ENCODE measurements at regions of chr1 and their contacts with region 1.

Region 1: DNA sequence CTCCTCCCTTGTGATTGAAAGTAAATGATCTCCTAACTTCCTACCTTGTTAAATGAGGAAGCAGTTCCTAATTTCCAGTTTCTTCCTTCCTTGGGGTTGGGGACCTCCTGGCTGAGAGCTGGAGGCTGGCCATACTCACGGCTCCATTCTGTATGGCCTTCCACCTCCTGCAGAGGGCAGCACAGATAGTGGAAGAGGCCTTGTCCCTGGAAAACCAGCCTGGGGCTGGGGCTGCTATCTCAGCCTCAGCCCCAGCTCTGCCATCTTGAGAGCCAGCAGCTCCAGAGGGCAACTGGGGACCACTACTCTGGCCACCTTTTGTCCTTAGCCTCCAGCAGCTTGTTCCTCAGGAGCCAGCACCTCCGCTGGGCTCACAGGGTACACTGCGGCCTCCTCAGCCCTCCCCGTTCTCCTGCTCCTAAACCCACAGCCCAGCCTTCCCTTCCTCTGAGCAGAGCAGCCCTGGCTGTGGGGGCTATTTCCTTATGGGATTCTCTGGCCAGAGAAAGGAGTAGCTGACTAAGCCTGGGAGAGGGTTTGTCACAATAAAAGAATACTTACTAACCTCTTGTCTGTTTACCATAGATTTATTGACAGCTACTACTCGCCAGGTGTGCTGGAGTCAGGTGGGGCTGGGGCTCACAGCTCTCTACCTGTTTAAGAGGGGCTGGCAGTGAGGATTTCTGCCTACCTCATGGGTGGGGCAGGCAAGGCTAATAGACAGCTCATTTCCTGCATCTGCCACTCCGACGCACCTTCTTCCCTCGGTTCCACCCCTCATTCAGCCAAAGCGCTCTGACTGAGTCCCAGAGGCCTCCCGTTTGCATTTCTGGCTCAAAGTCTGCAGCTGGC is 6.3 kb downstream of the TMEM234 start:
- DNase-seq: no peak
- ATAC-seq: peak; percentile 95
- H3K4me3 ChIP-seq: no peak overlapping the region
- H3K27ac ChIP-seq: no peak overlapping the region
- H3K4me1 ChIP-seq: no peaks in the 10 kb centered on the region
- H3K27me3 ChIP-seq: no peaks in the 10 kb centered on the region
- CTCF ChIP-seq: peak; percentile 82 to 93 (median 91)
- EP300 ChIP-seq: no peak
- POLR2A ChIP-seq: no peak
- RAD21 ChIP-seq: peak; percentile 82

Region 2: DNA sequence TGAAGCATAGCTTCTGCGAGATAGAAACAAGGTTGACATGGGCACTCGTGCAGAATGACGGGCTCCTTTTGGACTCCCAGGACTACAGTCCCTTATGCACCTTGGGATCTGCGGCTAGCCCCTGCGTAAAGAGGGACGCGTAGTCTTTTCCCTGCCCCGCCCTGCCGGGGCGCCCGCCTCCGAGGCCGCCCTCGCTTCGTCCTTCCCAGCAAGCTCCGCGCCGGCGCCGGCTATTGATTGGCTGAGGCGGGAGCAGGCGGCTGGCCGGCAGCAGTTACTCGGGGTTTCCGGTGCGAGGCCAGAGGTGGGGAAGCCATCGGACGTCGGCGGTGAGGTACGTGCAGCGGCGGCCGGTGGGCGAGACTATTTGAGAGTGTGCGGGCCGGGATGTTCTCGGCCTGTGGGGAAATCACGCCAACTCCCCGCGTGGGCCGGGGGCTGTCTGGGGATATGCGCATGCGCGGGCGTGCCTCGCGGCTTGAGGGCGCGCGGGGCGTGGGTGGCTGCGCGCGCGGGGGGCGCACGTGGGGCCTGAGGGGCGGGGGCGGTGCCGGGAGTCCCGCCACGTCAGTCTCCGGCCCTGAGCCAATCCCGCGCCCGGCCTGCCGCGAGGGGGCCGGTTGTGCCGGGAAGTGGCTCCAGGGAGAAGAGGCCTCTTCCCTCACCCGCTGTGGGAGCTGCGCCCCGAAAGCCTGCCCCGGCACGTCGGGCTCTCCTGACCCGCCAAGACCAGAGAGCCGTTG is 36.2 kb before region 1 on chr1 and contains the start of gene TXLNA:
- CTCF ChIA-PET with region 1: interaction called, 16 read pairs
- POLR2A ChIA-PET with region 1: interaction called, 5 read pairs
- RAD21 ChIA-PET with region 1: no interaction called
- SMC1A ChIA-PET with region 1: interaction called, 3 read pairs
- in situ Hi-C with region 1: no loop called
- intact Hi-C with region 1: no loop called
- DNase-seq: peak; percentile 60
- ATAC-seq: peak; percentile 93
- H3K4me3 ChIP-seq: peak within 1 kb of the TSS; percentile 89
- H3K27ac ChIP-seq: peak within 1 kb of the TSS; percentile 85
- H3K4me1 ChIP-seq: peaks cover 17% of the 10 kb centered on the region
- H3K27me3 ChIP-seq: no peaks in the 10 kb centered on the region
- CTCF ChIP-seq: no peak
- EP300 ChIP-seq: peak in 1 of 2 experiments; percentile 33; a peak in 1 of 4 replicates
- POLR2A ChIP-seq: peak; percentile 99
- RAD21 ChIP-seq: no peak
- polyA plus RNA-seq, gene TXLNA: 7.2 to 10.3 TPM

Region 3: GRCh38 chr1:32234792-32235191 is 18.9 kb after region 1 on chr1:
- CTCF ChIA-PET with region 1: interaction called, 50 read pairs
- POLR2A ChIA-PET with region 1: no interaction called
- RAD21 ChIA-PET with region 1: interaction called, 10 read pairs
- SMC1A ChIA-PET with region 1: interaction called, 37 read pairs
- in situ Hi-C with region 1: no loop called
- intact Hi-C with region 1: no loop called
- DNase-seq: no peak
- ATAC-seq: peak; percentile 16; the same call in 1 of the 3 replicates
- H3K4me3 ChIP-seq: no peak overlapping the region
- H3K27ac ChIP-seq: no peak overlapping the region
- H3K4me1 ChIP-seq: no peaks in the 10 kb centered on the region
- H3K27me3 ChIP-seq: no peaks in the 10 kb centered on the region
- CTCF ChIP-seq: no peak
- EP300 ChIP-seq: no peak
- POLR2A ChIP-seq: no peak
- RAD21 ChIP-seq: no peak

Region 4: DNA sequence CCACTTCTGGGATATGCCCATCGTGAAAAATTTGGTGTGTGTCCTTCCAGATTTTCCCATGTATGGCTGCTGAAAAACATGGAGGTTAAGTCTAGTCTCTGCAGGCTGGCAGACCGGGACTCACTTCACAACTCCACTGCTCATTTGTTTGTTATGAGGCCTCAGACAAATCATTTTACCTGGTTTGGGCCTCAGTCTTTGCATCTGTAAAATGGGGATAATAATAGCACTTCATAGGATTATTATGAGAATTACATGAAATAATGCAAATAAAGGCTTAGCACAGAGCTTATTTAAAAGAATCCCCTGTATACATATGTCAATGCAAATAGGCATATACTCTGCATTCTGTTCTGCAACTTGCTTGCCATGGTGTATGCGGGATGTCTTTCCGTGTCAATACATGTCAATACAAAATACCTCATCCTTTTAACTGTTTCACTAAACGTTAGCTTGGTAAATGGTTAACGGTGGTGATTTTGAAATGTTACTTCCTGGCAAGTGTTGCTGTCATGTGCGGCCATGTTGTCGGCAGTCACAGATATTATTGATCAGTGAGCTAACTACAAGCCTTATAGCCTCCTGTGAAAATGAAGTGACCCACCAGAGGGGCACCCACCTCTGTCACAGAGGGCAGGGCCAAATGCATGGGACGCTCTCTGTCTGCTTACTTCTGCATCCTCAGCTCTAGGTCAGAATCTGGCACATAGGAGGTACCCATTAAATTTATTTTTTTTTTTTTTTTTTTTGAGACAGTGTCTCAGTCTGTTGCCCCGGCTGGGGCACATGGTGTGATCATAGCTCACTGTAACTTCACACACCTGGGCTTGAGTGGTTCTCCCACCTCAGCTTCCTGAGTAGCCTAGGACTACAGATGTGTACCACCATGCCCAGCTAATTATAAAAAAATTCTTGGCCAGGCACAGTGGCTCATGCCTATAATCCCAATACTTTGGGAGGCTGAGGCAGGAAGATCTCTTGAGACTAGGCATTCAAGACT is 39.5 kb after region 1 on chr1:
- CTCF ChIA-PET with region 1: interaction called, 123 read pairs
- POLR2A ChIA-PET with region 1: interaction called, 18 read pairs
- RAD21 ChIA-PET with region 1: interaction called, 45 read pairs
- SMC1A ChIA-PET with region 1: interaction called, 44 read pairs
- in situ Hi-C with region 1: no loop called
- intact Hi-C with region 1: no loop called
- DNase-seq: no peak
- ATAC-seq: peak; percentile 1; the same call in 2 of the 3 replicates
- H3K4me3 ChIP-seq: peak overlapping the region; percentile 33; the same call in 1 of the 2 replicates
- H3K27ac ChIP-seq: peak overlapping the region; percentile 89
- H3K4me1 ChIP-seq: peaks cover 66% of the 10 kb centered on the region
- H3K27me3 ChIP-seq: no peaks in the 10 kb centered on the region
- CTCF ChIP-seq: no peak
- EP300 ChIP-seq: no peak
- POLR2A ChIP-seq: no peak
- RAD21 ChIP-seq: no peak

Region 5: DNA sequence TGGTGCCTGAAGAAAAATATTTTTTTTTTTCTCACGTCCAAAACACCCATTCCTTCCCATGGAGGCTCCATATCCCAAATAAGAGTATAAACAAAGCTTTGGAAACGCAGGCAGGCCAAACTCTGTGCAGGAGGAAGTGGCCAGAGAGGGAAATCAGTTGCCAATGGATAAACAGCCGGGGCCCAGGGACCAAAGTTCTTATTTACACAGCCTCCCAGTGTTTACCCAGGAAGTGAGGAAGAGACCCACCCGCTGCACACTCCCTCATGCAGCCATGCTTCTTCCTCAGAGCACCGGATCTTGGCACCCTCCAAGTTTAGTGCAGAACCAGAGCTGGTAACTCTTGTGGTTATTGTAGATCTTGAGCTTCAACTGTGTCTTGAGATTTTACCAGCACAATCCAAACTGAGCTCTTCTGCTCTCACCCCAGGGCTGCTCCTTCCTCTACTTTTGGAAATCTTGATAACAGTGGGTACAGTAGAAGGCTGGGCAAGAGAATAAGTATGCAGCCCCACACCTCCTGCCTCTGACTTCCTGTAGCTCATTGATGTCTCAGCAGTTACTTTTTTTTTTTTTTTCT is 105.9 kb after region 1 on chr1:
- CTCF ChIA-PET with region 1: interaction called, 99 read pairs
- POLR2A ChIA-PET with region 1: interaction called, 12 read pairs
- RAD21 ChIA-PET with region 1: interaction called, 49 read pairs
- SMC1A ChIA-PET with region 1: interaction called, 37 read pairs
- in situ Hi-C with region 1: no loop called
- intact Hi-C with region 1: no loop called
- DNase-seq: no peak
- ATAC-seq: peak; percentile 9; the same call in 1 of the 3 replicates
- H3K4me3 ChIP-seq: no peak overlapping the region
- H3K27ac ChIP-seq: peak overlapping the region; percentile 69
- H3K4me1 ChIP-seq: peaks cover 54% of the 10 kb centered on the region
- H3K27me3 ChIP-seq: no peaks in the 10 kb centered on the region
- CTCF ChIP-seq: no peak
- EP300 ChIP-seq: no peak
- POLR2A ChIP-seq: no peak
- RAD21 ChIP-seq: no peak

Region 6: GRCh38 chr1:32394141-32394889 is 178.5 kb after region 1 on chr1 and contains the start of gene BSDC1:
- CTCF ChIA-PET with region 1: interaction called, 15 read pairs
- POLR2A ChIA-PET with region 1: interaction called, 4 read pairs
- RAD21 ChIA-PET with region 1: interaction called, 9 read pairs
- SMC1A ChIA-PET with region 1: interaction called, 4 read pairs
- in situ Hi-C with region 1: no loop called
- intact Hi-C with region 1: no loop called
- DNase-seq: peak; percentile 94
- ATAC-seq: peak; percentile 97
- H3K4me3 ChIP-seq: peak within 1 kb of the TSS; percentile 78
- H3K27ac ChIP-seq: peak within 1 kb of the TSS; percentile 76
- H3K4me1 ChIP-seq: no peaks in the 10 kb centered on the region; the same call in 1 of the 2 replicates
- H3K27me3 ChIP-seq: no peaks in the 10 kb centered on the region
- CTCF ChIP-seq: no peak
- EP300 ChIP-seq: 0 out of 4 replicates have a peak, but pooled peaks of 1 of the 2 experiments have one; percentile 26
- POLR2A ChIP-seq: peak; percentile 93
- RAD21 ChIP-seq: no peak
- polyA plus RNA-seq, gene BSDC1: 3.0 to 4.9 TPM

Measured in GM12878 (cell line).